ENCODE measurements at regions of chr12 and their contacts with region 1.

Region 1: GRCh38 chr12:57782608-57783465 is at the start of gene TSFM:
- DNase-seq: no peak
- H3K4me3 ChIP-seq: peak within 1 kb of the TSS; percentile 83 to 87
- H3K27ac ChIP-seq: peak within 1 kb of the TSS; percentile 67
- H3K4me1 ChIP-seq: peaks cover 21% of the 10 kb centered on the region
- H3K27me3 ChIP-seq: no peaks in the 10 kb centered on the region
- CTCF ChIP-seq: peak; percentile 93 to 97 (median 96)
- POLR2A ChIP-seq: peak in 1 of 2 donors; percentile 39
- total RNA-seq, gene TSFM: 17.9 TPM

Region 2: DNA sequence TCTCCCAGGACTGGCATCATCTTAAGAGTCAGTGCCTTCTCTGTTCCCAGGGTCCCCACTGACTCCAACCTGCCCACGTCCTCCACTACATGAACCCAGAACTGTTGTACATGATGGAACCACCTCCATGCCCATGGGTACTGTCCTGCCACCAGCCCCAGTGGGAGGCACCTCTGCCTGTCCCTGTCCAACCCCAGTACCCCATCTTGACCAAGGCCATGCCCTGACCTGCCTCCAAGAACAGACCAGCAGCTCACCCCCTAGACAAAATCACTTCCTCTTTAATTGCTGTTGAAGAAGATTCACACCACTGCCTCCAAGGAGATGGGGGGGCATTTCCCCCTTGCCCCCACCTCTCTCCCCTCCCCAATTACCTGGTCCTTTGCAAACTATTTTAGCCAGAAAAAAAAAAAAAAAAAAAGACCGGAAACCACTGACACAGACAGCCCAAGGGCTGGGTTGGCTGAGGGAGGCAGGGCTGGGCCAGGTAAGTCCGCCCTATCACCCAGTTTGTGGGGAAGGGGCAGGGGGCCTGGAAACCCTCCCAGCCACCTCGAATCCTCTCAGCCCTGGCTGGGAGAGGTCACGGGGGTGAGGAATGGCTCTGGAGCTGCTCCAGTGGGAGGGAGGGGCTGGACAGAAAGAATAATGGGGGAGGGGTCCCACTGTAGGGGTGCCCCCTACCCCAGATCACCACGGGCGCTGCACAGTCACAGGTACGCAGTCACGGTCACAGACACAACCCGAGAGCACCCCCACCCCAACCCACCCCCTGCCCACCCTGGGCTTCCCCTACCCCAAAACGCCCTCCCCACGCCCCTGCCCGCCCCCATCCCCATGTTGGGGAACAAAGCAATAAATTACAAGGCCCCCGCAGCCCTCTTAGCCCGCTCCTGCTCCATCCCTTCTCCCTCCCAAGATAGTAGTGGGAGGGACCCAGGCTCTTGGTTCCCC is 57.6 kb before region 1 on chr12:
- intact Hi-C with region 1: loop called (anchors 2 kb)
- DNase-seq: peak; percentile 43 to 81
- H3K4me3 ChIP-seq: peak overlapping the region; percentile 63 to 66
- H3K27ac ChIP-seq: no peak overlapping the region
- H3K4me1 ChIP-seq: peaks cover 10% of the 10 kb centered on the region
- H3K27me3 ChIP-seq: no peaks in the 10 kb centered on the region
- CTCF ChIP-seq: no peak
- POLR2A ChIP-seq: no peak

Region 3: DNA sequence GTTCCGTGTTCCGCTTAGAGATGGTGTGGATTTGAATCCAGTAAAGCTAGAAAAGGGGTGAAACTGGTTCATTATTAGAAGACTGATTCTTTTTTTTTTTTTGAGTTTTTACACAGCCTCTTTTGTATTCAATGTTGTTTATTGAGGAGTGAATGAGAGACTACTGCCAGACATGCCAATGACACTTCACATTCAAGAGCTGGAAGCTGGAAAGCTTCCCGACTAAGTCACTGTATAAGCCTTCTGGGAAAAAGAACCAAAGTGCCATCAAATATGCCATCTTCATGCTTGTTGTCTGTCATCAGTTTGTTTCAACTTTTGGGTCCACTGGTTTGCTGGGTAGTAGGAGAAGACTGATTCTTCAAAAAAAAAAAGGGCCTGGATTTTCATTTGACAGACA is 323.4 kb after region 1 on chr12:
- intact Hi-C with region 1: no loop called
- DNase-seq: no peak
- H3K4me3 ChIP-seq: no peak overlapping the region
- H3K27ac ChIP-seq: no peak overlapping the region
- H3K4me1 ChIP-seq: no peaks in the 10 kb centered on the region
- H3K27me3 ChIP-seq: no peaks in the 10 kb centered on the region
- CTCF ChIP-seq: no peak
- POLR2A ChIP-seq: no peak

Measured in vagina (tissue), 2 donors.